Activated T-helper 1 cell treated with anti-CD3 and anti-CD28 coated beads, Interleukin-12 subunit alpha, Interleukin-12 subunit beta, Interleukin-2, Interleukin-4 antibody, amounts not matched to agents 30 ng/mL and 10 ng/mL and 1 ng/mL, durations not matched to agents 14 hours and 24 hours and 36 hours (primary cell): ENCODE measurements at regions of chr5 and their contacts with region 1.

Region 1: GRCh38 chr5:66144074-66144833 is at the start of gene SREK1:
- DNase-seq: peak; percentile 84
- H3K4me3 Mint-ChIP-seq: peak within 1 kb of the TSS; percentile 96
- H3K27ac Mint-ChIP-seq: peak within 1 kb of the TSS; percentile 99
- H3K4me1 Mint-ChIP-seq: peaks cover 47% of the 10 kb centered on the region
- H3K27me3 Mint-ChIP-seq: peaks cover 2% of the 10 kb centered on the region
- total RNA-seq, gene SREK1: 72.0 and 76.7 TPM in 2 replicates

Region 2: GRCh38 chr5:64768358-64769312 is 1375.6 kb before region 1 on chr5 and contains the starts of genes CWC27 and SREK1IP1:
- intact Hi-C with region 1: loop called (anchors 10 kb)
- DNase-seq: peak; percentile 79
- H3K4me3 Mint-ChIP-seq: peak within 1 kb of the TSS; percentile 98
- H3K27ac Mint-ChIP-seq: peak within 1 kb of the TSS; percentile 96
- H3K4me1 Mint-ChIP-seq: peaks cover 51% of the 10 kb centered on the region
- H3K27me3 Mint-ChIP-seq: no peaks in the 10 kb centered on the region
- total RNA-seq, gene CWC27: 29.1 and 33.5 TPM in 2 replicates
- total RNA-seq, gene SREK1IP1: 29.4 and 31.7 TPM in 2 replicates

Region 3: GRCh38 chr5:65624571-65625555 is 519.4 kb before region 1 on chr5 and contains the starts of genes SHLD3 and TRAPPC13:
- intact Hi-C with region 1: loop called (anchors 1 kb)
- DNase-seq: peak; percentile 81
- H3K4me3 Mint-ChIP-seq: peak within 1 kb of the TSS; percentile 94
- H3K27ac Mint-ChIP-seq: peak within 1 kb of the TSS; percentile 96
- H3K4me1 Mint-ChIP-seq: peaks cover 33% of the 10 kb centered on the region
- H3K27me3 Mint-ChIP-seq: no peaks in the 10 kb centered on the region
- total RNA-seq, gene SHLD3: 6.5 and 7.6 TPM in 2 replicates
- total RNA-seq, gene TRAPPC13: 21.7 and 23.7 TPM in 2 replicates

Region 4: DNA sequence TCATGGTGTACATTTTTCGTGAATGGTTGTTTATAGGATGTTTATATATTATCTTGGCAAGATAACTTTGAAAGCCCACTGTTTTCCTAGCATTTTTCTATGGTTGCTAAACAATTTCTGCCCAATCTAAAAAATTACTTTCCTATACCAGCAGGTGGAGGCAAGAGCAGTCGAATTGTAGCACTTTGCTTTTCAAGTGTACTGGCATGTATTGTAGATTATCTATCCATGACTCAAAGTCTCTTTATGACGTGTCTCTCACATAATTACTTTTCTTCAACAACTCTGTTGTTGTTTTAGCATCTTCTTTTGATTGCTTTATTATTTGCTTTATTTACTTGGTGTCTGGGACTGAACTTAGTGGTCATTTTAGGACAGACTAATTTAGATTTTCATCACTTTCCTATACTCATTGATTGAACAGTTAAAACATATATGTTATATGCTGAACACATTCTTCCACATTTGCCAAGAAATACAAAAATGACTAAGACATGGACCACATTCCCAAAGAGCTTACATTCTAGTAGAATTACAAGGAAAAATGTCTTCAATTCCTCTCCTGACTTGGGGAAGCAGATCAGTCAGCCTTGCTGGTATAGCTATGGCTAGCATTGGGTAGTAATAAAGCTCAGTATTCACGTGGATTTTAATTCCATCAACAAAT is 401.6 kb before region 1 on chr5:
- intact Hi-C with region 1: loop called (anchors 1 kb)
- DNase-seq: no peak
- H3K4me3 Mint-ChIP-seq: no peak overlapping the region
- H3K27ac Mint-ChIP-seq: no peak overlapping the region
- H3K4me1 Mint-ChIP-seq: peaks cover 16% of the 10 kb centered on the region
- H3K27me3 Mint-ChIP-seq: peaks cover 3% of the 10 kb centered on the region

Region 5: GRCh38 chr5:65774346-65774745 is 369.9 kb before region 1 on chr5:
- intact Hi-C with region 1: no loop called
- DNase-seq: peak; percentile 10
- H3K4me3 Mint-ChIP-seq: no peak overlapping the region
- H3K27ac Mint-ChIP-seq: peak overlapping the region; percentile 3
- H3K4me1 Mint-ChIP-seq: peaks cover 46% of the 10 kb centered on the region
- H3K27me3 Mint-ChIP-seq: no peaks in the 10 kb centered on the region

Region 6: GRCh38 chr5:66171349-66172344 is 27.4 kb after region 1 on chr5:
- intact Hi-C with region 1: loop called (anchors 1 kb)
- DNase-seq: peak; percentile 30
- H3K4me3 Mint-ChIP-seq: no peak overlapping the region
- H3K27ac Mint-ChIP-seq: peak overlapping the region; percentile 40
- H3K4me1 Mint-ChIP-seq: peaks cover 29% of the 10 kb centered on the region
- H3K27me3 Mint-ChIP-seq: no peaks in the 10 kb centered on the region